Ovary (tissue), 10 donors: ENCODE measurements at regions of chr15 and their contacts with region 1.

Region 1: DNA sequence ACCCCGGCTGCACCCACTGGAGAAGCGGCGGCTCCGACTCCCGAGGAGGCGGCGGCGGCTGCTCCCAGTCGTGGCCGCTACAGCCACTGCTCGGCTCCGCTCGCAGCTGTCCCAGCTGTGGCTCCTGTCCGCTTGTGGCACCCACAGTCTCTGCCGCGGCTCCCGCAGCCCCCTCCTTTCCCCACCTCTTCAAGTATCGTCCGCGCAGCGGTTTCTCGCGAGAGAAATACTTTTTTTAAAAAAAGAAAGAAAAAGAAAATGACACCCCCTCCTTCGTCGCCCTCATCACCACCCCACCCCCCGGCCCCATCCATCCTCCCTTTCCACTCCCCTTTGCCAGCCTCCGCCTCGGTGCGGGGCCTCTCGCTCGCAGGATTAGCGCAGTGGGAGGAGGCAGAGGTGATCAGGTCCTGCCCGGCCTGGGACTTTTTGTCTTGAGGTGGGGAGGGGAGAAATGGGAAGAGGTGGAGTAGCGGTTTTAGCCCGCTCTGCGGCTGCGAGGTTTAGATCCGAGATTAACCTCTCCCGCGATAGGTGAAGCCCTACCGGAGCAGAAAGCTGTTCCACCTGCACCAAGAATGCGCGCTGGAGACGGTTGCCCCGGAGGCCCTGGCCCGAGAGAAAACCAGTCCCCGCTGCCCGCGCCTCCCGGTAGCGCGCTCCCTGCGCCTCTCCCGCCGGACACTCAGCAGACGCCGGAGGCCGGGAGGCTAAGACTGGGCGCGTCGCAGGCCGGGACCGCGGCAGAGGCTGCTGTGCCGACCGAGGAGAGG is at the start of gene FBN1:
- DNase-seq: peak; percentile 84 to 89 (median 87)
- H3K4me3 ChIP-seq: peak within 1 kb of the TSS; percentile 93
- H3K27ac ChIP-seq: peak within 1 kb of the TSS; percentile 74 to 86
- H3K4me1 ChIP-seq: peaks cover 5% of the 10 kb centered on the region
- H3K27me3 ChIP-seq: no peaks in the 10 kb centered on the region
- CTCF ChIP-seq: no peak
- EP300 ChIP-seq: no peak
- POLR2A ChIP-seq: peak; percentile 77
- total RNA-seq, gene FBN1: 62.5 to 143 (median 97.4) TPM

Region 2: GRCh38 chr15:48358229-48358641 is 287.5 kb before region 1 on chr15:
- intact Hi-C with region 1: loop called in 2 of 4 experiments (anchors 5 to 10 kb)
- DNase-seq: no peak
- H3K4me3 ChIP-seq: no peak overlapping the region
- H3K27ac ChIP-seq: no peak overlapping the region
- H3K4me1 ChIP-seq: no peaks in the 10 kb centered on the region
- H3K27me3 ChIP-seq: no peaks in the 10 kb centered on the region
- CTCF ChIP-seq: peak; percentile 26 to 62 (median 48)
- EP300 ChIP-seq: no peak
- POLR2A ChIP-seq: no peak

Region 3: DNA sequence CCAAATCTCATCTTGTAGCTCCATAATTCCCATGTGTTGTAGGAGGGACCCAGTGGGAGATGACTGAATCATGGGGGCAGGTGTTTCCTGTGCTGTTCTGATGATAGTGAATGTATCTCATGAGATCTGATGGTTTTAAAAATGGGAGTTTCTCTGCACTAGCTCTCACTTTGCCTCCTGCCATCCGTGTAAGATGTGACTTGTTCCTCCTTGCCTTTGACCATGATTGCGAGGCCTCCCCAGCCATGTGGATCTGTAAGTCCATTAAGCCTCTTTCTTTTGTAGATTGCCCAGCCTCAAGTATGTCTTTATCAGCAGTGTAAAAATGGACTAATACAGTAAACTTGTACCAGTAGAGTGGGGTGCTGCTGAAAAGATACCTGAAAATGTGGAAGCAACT is 270.0 kb before region 1 on chr15:
- intact Hi-C with region 1: no loop called
- DNase-seq: no peak
- H3K4me3 ChIP-seq: no peak overlapping the region
- H3K27ac ChIP-seq: no peak overlapping the region
- H3K4me1 ChIP-seq: peaks cover 2% of the 10 kb centered on the region
- H3K27me3 ChIP-seq: no peaks in the 10 kb centered on the region
- CTCF ChIP-seq: no peak
- EP300 ChIP-seq: no peak
- POLR2A ChIP-seq: no peak

Region 4: DNA sequence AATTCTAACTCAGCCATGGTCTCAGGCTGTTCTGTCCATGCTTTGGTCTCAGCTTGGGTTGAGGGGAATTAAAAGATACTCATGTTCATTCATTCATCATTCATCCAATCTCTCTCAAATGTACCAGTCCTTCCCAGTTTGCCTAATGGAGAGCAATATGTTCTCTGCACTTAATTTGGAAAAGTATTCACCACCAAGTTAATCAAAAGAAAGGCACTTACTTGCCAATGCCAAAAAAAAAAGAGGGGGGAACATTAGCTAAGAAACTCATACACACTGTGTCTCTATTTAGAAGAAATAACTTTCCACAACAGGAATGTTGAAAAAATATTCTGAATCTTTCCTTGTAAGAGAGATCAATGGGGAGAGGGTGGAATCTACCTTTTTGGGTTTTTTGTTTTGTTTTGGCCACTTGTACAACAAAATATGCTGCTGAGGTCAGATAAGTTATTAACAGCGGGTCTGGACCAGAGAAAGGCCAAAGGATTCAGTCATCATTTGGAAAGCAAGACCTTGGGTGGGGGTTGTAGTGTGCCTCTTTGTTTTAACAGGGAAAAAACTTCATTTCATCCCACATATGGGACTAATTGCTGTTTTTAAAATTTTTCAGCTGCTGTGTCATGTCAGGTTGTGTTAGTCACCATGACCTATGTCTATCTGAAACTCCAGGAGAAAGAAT is 152.5 kb before region 1 on chr15:
- intact Hi-C with region 1: loop called in 1 of 4 experiments (anchors 10 kb)
- DNase-seq: no peak
- H3K4me3 ChIP-seq: no peak overlapping the region
- H3K27ac ChIP-seq: peak overlapping the region in 1 of 2 donors; percentile 16
- H3K4me1 ChIP-seq: no peaks in the 10 kb centered on the region
- H3K27me3 ChIP-seq: no peaks in the 10 kb centered on the region
- CTCF ChIP-seq: no peak
- EP300 ChIP-seq: no peak
- POLR2A ChIP-seq: no peak

Region 5: DNA sequence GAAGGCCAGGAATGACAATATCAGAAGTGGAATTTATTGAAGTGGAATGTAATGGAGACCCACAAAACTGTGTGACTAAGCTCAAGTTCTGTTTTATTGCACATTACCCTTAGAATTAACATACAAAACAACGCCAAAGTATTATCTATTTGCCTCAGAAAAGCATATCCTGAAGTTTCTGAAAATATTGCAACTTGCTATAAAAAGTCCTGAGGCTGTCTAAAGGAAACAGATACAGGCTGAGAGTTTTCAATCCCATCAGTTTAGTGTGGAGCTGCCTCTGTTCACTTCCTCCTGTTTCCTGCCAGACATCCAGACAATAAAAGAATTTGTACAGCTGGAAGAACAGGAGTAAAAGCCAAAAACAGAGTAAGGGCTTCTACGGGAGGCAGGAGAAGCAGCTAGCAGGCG is 109.1 kb before region 1 on chr15:
- intact Hi-C with region 1: loop called in 1 of 4 experiments (anchors 10 kb)
- DNase-seq: no peak
- H3K4me3 ChIP-seq: no peak overlapping the region
- H3K27ac ChIP-seq: peak overlapping the region in 1 of 2 donors; percentile 68
- H3K4me1 ChIP-seq: peaks cover 16% of the 10 kb centered on the region
- H3K27me3 ChIP-seq: no peaks in the 10 kb centered on the region
- CTCF ChIP-seq: no peak
- EP300 ChIP-seq: no peak
- POLR2A ChIP-seq: no peak

Region 6: DNA sequence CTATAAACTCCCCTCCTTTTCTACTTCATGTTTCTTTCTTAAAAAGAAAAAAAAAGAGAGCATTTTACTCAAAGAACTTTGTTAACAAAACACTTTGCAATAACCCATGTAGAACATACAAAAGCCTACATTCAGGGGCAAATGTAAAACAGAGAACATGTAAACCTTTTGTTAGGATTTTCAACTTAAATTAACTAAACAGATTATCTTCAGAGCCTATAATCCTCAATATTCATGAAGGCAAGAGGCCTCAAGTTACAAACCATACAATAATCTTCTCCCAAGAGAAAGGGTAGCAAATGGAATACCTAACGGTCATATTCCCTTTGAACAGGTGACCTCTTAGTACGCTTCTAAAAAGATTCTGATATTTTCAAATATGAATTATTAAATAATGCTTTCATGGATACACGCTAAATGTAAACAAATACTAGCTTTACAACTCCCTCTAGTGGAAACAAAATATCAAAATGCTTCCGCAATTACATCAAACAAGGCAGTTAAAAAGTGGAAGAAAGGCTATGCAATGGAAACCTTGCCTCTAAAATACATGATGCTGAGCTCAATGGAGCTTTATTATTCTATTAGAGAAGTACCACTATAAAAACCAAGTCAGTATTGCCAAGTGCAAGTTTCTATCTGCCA is 155.2 kb after region 1 on chr15:
- intact Hi-C with region 1: loop called in 2 of 4 experiments (anchors 10 kb)
- DNase-seq: no peak
- H3K4me3 ChIP-seq: no peak overlapping the region
- H3K27ac ChIP-seq: no peak overlapping the region
- H3K4me1 ChIP-seq: no peaks in the 10 kb centered on the region
- H3K27me3 ChIP-seq: no peaks in the 10 kb centered on the region
- CTCF ChIP-seq: peak in 2 of 3 donors; percentile 48 to 61
- EP300 ChIP-seq: no peak
- POLR2A ChIP-seq: no peak